PC-9 (cell line): ENCODE measurements at regions of chr11 and their contacts with region 1.

Region 1: DNA sequence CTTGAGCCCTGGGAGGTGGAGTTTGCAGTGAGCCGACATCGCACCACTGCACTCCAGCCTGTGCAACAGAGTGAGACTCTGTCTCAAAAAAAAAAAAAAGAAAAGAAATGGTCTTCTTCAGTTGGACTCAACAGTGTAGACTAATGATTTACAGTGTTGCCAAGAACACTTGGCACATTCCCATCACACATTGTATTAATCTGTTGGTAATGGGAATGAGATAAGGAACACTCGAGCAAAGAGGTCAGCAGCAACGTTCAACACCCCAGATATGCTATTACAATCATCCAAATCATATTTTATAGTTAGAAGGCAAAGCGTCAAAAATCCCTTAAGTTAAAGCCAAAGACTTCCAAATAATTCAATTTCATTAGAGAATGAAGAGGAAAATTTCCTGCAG is 14.5 kb downstream of the CDON start:
- DNase-seq: no peak
- H3K4me3 ChIP-seq: no peak overlapping the region
- H3K27ac ChIP-seq: no peak overlapping the region
- H3K4me1 ChIP-seq: no peaks in the 10 kb centered on the region
- H3K27me3 ChIP-seq: no peaks in the 10 kb centered on the region
- CTCF ChIP-seq: no peak

Region 2: GRCh38 chr11:125902927-125903710 is 145.1 kb before region 1 on chr11 and contains the start of gene PUS3:
- CTCF ChIA-PET with region 1: no interaction called
- POLR2A ChIA-PET with region 1: interaction called, 22 read pairs
- intact Hi-C with region 1: no loop called
- DNase-seq: peak; percentile 68 to 76
- H3K4me3 ChIP-seq: peak within 1 kb of the TSS; percentile 98
- H3K27ac ChIP-seq: no peak within 1 kb of the TSS
- H3K4me1 ChIP-seq: no peaks in the 10 kb centered on the region
- H3K27me3 ChIP-seq: peaks cover 32% of the 10 kb centered on the region
- CTCF ChIP-seq: no peak
- total RNA-seq, gene PUS3: 5.7 and 6.5 TPM in 2 replicates